ENCODE measurements at regions of chr12 and their contacts with region 1.

Region 1: DNA sequence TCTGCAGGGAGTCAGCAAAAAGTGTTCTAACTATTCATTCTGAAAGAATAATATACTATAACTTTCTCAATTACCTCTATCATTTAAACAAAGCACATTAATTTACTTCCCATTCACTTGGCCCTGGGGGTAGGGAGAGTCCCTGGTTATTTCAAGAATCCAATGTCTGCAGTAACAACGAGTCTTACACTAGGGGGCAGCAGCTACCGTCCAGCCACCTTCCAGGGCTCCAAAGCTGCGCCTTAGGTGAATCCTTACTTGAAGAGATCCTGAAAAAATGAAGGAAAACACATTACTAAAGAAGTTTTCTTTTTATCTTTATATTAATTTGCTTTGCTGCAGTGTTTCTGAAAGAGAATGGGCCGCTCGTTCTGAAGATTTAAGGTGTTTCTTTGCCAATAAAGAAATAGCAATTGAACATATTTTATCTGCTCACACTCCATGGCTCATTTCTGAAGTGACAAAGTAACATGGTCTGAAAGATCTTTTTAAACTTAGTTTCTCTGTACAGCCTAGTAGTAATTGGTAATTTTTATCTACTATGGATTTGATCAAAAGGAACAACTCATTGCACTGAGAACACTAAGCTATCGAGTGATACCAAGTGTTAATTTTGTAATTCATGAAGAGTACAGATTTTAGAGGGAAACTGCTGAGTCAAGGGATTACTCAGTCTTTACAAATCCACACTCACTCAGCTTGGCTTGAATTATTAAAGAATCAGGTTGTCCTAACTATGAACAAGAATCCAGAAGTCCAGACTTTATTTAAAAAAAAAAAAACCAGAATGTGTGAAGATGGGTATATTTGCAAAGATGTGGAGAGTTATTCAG is 27.6 kb downstream of the BHLHE41 start:
- DNase-seq: peak; percentile 84

Region 2: DNA sequence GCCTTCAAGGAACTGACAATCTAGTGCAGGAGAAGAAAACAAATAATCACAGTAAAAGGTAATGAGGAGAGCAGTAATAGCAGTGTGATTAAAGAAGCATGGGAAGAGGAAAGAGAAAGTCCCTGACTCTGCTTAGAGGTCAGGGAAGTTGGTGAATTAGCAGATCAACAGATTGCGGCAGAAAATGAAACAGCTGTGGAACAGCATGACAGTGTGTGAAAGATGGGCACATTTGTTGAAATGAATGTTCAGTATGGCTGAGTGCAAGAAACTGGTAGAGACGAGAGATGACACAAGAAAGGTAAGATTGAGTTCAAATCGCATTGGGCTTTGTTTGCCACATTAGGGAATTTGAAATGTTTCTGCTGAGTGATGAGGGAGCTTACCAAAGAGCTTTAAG is 202.5 kb before region 1 on chr12:
- intact Hi-C with region 1: no loop called
- DNase-seq: no peak

Region 3: GRCh38 chr12:26651566-26652188 is 554.4 kb after region 1 on chr12:
- intact Hi-C with region 1: loop called (anchors 5 kb)
- DNase-seq: no peak

Measured in cardiac septum (tissue), 1 donor.